Vagina (tissue), 2 donors: ENCODE measurements at regions of chr1 and their contacts with region 1.

Region 1: GRCh38 chr1:225474986-225475820 is 47.4 kb upstream of the LBR start:
- DNase-seq: peak; percentile 88 to 94
- H3K4me3 ChIP-seq: peak overlapping the region in 1 of 2 donors; percentile 16
- H3K27ac ChIP-seq: no peak overlapping the region
- H3K4me1 ChIP-seq: no peaks in the 10 kb centered on the region
- H3K27me3 ChIP-seq: no peaks in the 10 kb centered on the region
- CTCF ChIP-seq: peak; percentile 100
- POLR2A ChIP-seq: peak in 1 of 2 donors; percentile 12

Region 2: DNA sequence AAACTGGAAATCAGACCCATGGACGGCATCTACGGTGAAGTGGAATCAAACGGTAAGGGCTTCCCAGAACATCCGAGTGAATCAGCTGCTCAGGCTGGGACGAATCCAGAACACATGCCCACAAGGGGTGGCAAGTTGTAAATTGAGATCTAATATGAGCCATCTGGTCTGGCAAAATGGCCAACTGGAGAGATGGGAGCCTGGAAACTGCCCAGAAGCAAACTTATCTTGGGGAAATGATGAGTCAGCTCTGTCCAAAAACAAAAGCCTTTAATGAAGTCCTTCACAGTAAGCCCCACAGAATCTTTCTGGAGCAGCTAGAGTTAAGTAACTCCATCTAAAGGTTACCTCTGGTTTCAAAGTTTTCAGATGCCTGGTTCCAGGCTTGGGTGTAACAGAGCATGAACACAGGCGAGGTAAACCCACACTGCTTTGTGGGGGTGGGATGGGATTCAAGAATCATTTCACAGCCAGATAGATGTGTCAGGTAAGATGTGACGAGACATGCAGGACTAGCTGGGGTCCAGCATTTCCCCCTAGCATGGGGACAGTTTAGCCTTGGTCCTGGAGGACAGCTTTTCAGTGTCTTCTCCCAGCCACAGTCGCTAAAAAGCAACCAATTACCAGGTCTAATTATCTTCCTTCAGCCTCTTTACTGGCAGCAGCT is 291.9 kb after region 1 on chr1:
- intact Hi-C with region 1: loop called (anchors 2 kb)
- DNase-seq: no peak
- H3K4me3 ChIP-seq: no peak overlapping the region
- H3K27ac ChIP-seq: peak overlapping the region; percentile 68
- H3K4me1 ChIP-seq: peaks cover 68% of the 10 kb centered on the region
- H3K27me3 ChIP-seq: no peaks in the 10 kb centered on the region
- CTCF ChIP-seq: no peak
- POLR2A ChIP-seq: no peak

Region 3: GRCh38 chr1:225845571-225846259 is 370.5 kb after region 1 on chr1:
- intact Hi-C with region 1: loop called (anchors 10 kb)
- DNase-seq: peak in 1 of 2 donors; percentile 90
- H3K4me3 ChIP-seq: no peak overlapping the region
- H3K27ac ChIP-seq: peak overlapping the region; percentile 60
- H3K4me1 ChIP-seq: peaks cover 24% of the 10 kb centered on the region
- H3K27me3 ChIP-seq: no peaks in the 10 kb centered on the region
- CTCF ChIP-seq: peak; percentile 45 to 76 (median 46)
- POLR2A ChIP-seq: no peak

Region 4: DNA sequence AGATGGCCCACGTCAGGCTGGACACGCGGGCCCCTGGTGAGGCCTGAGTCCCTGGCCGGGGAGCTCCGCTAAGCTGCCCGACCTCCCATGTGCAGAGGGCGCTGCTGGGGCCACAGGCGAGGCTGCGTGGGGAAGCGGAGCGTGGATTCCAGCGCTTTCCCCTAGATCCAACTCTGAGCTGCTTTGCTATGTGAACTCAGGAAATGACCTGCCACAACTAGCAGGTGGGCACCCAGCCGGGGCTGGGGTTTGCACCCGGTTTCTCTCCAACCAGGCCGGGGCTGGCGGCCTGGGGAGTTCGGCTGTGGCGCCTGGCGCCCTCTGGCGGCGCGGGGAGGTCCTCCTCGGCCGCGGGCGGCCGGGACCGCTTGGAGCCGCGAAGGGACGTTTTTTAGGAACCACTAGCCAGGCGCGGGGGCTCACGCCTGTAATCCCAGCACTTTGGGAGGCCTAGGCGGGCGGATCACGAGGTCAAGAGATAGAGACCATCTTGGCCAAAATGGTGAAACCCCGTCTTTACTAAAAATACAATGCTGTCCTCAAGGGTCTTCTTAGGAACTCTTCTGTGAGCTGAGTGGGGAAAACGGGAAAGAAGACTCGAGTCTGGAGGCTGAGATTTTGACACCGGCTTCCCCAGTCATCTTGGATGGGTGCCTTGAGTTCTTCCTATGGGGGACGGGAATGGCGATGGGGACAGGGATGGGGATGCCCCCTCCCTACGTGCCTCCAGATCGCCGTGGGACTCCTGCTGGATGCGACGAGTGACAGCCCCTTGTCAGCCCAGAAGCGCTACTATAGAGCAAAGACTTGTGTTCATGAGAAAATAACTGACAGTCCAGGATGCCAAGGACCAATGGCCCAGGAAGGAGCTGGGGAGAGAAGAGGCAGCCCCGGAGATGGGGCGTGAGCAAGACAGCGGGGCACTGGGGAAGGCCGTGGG is 436.3 kb after region 1 on chr1:
- intact Hi-C with region 1: loop called (anchors 5 kb)
- DNase-seq: no peak
- H3K4me3 ChIP-seq: no peak overlapping the region
- H3K27ac ChIP-seq: no peak overlapping the region
- H3K4me1 ChIP-seq: no peaks in the 10 kb centered on the region
- H3K27me3 ChIP-seq: no peaks in the 10 kb centered on the region
- CTCF ChIP-seq: peak; percentile 72 to 81 (median 80)
- POLR2A ChIP-seq: no peak

Region 5: DNA sequence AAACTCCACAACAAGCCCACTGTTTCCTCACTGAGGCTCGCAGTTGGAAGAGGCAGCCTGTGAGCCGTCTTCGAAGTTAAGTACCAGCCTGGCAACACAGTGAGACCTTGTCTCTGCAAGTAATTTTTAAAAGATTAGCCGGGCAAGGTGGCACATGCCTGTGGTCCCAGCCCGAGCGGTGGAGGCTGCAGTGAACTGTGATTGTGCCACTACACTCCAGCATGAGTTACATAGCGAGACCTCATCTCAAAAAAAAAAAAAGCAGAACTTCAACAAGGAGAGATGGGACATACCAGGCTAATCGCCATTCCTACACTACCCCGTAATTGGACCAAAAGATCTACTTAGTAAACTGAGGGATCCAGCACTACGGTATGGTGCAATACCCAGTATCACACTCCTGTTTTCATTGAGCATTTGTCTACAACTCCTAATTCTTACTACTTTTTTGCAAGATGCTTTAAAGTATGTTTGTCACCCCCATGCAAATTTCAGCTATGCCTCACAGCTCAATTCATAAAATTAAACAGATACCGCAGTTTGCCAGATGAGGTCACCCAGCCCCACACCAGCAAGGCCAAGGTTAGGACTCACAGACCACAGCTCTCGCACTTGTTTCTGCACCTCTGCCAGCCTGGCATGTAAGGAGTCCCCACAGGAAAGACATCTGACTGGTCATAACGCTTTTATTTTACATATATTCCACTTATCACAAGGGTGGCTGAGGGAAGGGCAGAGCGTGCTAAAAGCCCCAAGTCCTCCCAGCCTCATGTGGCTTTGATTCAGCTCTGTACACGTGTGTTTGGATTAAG is 502.9 kb after region 1 on chr1:
- intact Hi-C with region 1: loop called (anchors 5 kb)
- DNase-seq: no peak
- H3K4me3 ChIP-seq: no peak overlapping the region
- H3K27ac ChIP-seq: no peak overlapping the region
- H3K4me1 ChIP-seq: no peaks in the 10 kb centered on the region
- H3K27me3 ChIP-seq: no peaks in the 10 kb centered on the region
- CTCF ChIP-seq: no peak
- POLR2A ChIP-seq: no peak